AG04449 (cell line): ENCODE measurements at regions of chr11 and their contacts with region 1.

Region 1: DNA sequence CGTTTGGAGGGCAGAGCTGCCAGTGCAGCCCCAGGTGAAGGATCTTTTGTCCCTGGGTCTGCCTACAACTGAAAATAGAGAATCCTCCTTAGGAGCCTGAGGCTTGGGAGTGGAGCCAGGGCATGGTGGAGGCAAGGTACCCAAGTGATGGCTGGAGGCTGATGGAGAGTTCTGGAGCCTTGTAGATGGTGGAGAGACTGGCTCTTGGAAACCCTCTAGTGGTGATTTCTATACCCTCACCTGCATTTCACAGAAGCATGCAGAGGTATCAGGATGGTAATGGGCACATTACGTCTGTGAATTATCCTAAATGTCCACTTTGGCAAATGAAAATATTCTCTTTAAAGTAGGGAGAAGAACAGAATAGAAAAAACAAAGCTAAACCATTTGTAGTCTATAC is 44.4 kb downstream of the INSC start:
- DNase-seq: no peak
- H3K4me3 ChIP-seq: no peak overlapping the region
- CTCF ChIP-seq: peak; percentile 55

Region 2: GRCh38 chr11:15059132-15059915 is 99.8 kb before region 1 on chr11:
- CTCF ChIA-PET with region 1: no interaction called
- POLR2A ChIA-PET with region 1: no interaction called
- DNase-seq: no peak
- H3K4me3 ChIP-seq: no peak overlapping the region
- CTCF ChIP-seq: no peak

Region 3: GRCh38 chr11:15139958-15140659 is 19.0 kb before region 1 on chr11:
- CTCF ChIA-PET with region 1: interaction called, 52 read pairs
- POLR2A ChIA-PET with region 1: no interaction called
- DNase-seq: no peak
- H3K4me3 ChIP-seq: no peak overlapping the region
- CTCF ChIP-seq: no peak

Region 4: DNA sequence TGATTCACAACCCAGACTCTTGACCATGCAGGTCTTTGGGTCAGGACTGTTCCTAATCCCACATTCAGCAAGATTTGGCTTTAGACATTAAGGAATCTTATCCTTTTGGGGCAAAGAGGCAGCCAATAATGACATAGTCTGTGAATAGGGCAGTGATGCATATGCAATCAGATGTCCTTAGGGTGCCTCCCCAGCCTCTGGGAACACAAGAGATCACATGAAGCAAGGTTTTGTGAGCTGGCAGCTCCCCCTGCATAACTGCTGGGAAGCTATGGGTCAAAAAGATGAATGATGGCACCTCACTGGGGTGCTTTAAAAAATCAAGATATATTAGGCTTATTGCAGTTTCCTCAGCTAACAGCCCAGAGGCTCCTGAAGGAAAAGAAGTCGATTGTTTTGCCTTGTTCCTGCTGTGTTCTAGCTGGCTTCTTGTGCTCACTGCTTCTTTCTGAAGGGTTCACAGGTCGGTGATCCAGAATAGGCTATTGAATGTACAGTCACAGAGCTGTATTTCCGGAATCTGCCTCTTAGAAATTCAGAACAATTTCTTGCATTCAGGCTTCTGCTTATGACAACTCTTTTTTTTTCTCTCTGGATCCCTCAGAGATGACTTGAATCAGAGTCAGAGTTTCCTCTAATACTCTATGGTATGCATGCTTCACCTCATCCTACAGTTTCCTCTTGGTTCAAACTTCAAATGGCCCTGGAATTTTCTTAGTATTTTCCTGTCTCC is 12.6 kb before region 1 on chr11:
- CTCF ChIA-PET with region 1: interaction called, 52 read pairs
- POLR2A ChIA-PET with region 1: no interaction called
- DNase-seq: no peak
- H3K4me3 ChIP-seq: no peak overlapping the region
- CTCF ChIP-seq: no peak

Region 5: GRCh38 chr11:15169815-15170551 is 10.9 kb after region 1 on chr11:
- CTCF ChIA-PET with region 1: interaction called, 43 read pairs
- POLR2A ChIA-PET with region 1: interaction called, 3 read pairs
- DNase-seq: no peak
- H3K4me3 ChIP-seq: no peak overlapping the region
- CTCF ChIP-seq: no peak

Region 6: GRCh38 chr11:15179167-15179566 is 20.1 kb after region 1 on chr11:
- CTCF ChIA-PET with region 1: interaction called, 33 read pairs
- POLR2A ChIA-PET with region 1: no interaction called
- DNase-seq: peak; percentile 59
- H3K4me3 ChIP-seq: no peak overlapping the region
- CTCF ChIP-seq: no peak